ENCODE measurements at regions of chr3 and their contacts with region 1.

Region 1: DNA sequence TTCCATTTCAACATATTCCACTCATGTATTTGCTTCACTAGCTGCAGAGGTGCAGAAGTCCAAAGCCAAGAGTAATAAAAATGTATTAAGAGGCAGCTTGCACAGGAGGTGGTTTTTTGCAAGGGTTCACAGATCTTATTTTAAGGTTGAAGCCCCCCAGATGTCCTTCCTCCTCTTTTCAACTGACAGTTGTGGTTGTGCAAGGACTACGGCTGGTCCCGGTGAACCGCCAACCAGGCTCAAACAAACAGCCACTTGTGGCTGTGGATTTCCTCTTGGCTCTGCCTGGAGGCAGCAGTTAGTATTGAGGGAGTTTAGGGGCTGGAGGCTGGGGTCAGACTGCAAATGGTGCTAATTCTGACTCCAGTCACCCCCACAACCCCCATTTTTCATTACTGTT is 240.7 kb upstream of the TBC1D5 start:
- DNase-seq: no peak
- H3K4me3 ChIP-seq: no peak overlapping the region
- CTCF ChIP-seq: no peak
- POLR2A ChIP-seq: no peak

Region 2: DNA sequence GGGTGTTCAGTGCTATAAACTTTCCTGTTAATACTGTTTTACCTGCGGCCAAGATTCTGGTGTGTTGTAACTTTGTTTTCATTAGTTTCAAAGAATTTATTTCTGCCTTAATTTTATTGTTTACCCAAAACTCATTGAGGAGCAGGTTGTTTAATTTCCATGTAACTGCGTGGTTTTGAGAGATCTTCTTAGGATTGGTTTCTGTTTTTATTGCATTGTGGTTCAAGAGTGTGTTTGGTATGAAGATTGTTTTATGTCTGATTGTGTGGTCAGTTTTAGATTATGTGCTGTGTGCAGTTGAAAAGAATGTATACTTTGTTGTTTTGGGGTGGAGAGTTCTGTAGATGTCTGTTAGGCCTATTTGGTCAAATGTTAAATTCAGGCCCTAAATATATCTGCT is 1942.1 kb before region 1 on chr3:
- intact Hi-C with region 1: no loop called
- DNase-seq: no peak
- H3K4me3 ChIP-seq: no peak overlapping the region
- CTCF ChIP-seq: no peak
- POLR2A ChIP-seq: no peak

Region 3: DNA sequence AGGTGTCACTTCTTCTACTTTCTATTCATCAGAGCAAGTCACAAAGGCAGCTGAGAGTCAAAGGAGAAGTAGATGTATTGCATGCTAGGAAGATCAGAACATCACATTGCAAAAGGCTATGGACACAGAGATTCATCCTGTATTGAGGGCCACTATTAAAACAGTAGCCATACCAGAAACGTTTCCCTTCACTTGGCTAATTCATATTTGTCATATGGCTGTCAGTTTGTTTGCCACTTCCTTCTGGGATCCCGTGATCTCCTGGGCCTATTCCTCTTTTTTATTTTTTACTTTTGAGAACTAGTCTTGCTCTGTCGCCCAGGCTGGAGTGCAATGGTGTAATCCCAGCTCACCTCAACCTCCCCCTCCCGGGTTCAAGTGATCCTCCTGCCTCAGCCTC is 626.1 kb after region 1 on chr3:
- intact Hi-C with region 1: loop called (anchors 5 kb)
- DNase-seq: no peak
- H3K4me3 ChIP-seq: no peak overlapping the region
- CTCF ChIP-seq: no peak
- POLR2A ChIP-seq: no peak